Sigmoid colon (tissue), 7 donors: ENCODE measurements at regions of chr7 and their contacts with region 1.

Region 1: DNA sequence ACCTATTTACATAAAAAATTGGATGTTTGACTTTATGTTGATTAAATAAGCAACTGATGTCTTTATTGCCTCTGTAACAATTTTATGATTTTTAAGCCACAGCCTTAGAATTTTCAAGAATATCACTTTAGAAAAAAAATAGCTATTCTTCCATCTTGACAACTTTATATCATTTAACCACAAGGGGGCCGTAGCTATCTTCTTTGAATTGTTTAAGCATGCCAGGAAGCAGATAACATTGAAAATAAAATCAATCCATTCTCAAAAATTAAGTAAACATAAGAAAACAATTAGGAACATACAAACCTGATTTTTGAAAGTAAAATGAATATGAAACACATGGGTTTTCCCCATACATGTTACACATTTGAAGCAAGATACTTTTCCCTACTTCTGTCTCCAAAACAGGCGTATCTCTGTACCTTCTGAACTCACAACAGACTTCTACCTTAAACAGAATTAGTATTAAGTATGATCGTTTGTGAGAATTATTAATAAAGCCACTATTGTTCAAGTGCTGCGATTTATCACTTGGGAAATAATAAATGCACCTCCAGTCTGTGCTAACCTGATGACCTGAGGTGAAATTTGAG is 209.0 kb downstream of the CACNA2D1 start:
- DNase-seq: no peak
- H3K4me3 ChIP-seq: no peak overlapping the region
- H3K27ac ChIP-seq: peak overlapping the region in 2 of 4 donors; percentile 48 to 52
- H3K4me1 ChIP-seq: peaks cover 0 to 21% (median 11%) of the 10 kb centered on the region in 4 donors
- H3K27me3 ChIP-seq: no peaks in the 10 kb centered on the region
- CTCF ChIP-seq: peak; percentile 17 to 62 (median 43)
- EP300 ChIP-seq: no peak
- POLR2A ChIP-seq: no peak

Region 2: GRCh38 chr7:82257118-82257695 is 22.7 kb after region 1 on chr7:
- intact Hi-C with region 1: no loop called
- DNase-seq: no peak
- H3K4me3 ChIP-seq: no peak overlapping the region
- H3K27ac ChIP-seq: peak overlapping the region in 2 of 4 donors; percentile 41 to 70
- H3K4me1 ChIP-seq: peaks cover 0 to 19% (median 16%) of the 10 kb centered on the region in 4 donors
- H3K27me3 ChIP-seq: no peaks in the 10 kb centered on the region
- CTCF ChIP-seq: no peak
- EP300 ChIP-seq: no peak
- POLR2A ChIP-seq: no peak

Region 3: GRCh38 chr7:82443547-82444219 is 209.1 kb after region 1 on chr7 and contains the start of gene CACNA2D1:
- intact Hi-C with region 1: loop called (anchors 2 kb)
- DNase-seq: peak; percentile 96
- H3K4me3 ChIP-seq: peak within 1 kb of the TSS; percentile 72 to 94 (median 88)
- H3K27ac ChIP-seq: peak within 1 kb of the TSS; percentile 95 to 98 (median 96)
- H3K4me1 ChIP-seq: peaks cover 0 to 35% (median 14%) of the 10 kb centered on the region in 4 donors
- H3K27me3 ChIP-seq: no peaks in the 10 kb centered on the region
- CTCF ChIP-seq: peak in 1 of 4 experiments; percentile 44
- EP300 ChIP-seq: no peak
- POLR2A ChIP-seq: no peak
- total RNA-seq, gene CACNA2D1: 59.7 to 115 (median 87.4) TPM

Region 4: DNA sequence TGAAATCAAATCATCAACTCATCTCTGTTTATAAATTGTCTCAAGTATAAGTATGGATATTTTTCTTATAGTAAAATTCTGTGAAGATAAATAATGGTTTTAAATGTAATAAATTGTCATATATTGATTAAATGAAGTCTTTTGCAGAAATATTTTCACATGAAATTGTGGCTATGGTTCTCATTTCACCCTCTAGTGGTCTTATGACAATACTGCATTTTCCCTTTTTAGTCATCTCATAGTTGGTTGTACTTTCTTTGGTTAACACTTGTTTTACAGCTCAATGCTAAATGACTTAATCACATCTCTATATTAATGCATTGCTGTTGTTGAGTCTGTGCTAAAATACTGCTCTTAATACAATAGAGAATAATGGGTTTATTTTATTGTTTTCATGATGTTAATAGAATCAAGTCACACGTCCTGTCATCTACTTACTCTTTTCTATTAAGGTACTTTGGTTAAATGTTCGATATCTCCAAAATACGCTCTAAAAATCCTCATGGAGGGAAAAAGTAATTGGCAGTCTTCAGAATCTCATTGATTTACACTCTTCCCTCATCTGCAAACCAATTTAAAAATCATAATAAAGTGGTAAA is 247.0 kb after region 1 on chr7:
- intact Hi-C with region 1: loop called (anchors 5 kb)
- DNase-seq: no peak
- H3K4me3 ChIP-seq: no peak overlapping the region
- H3K27ac ChIP-seq: no peak overlapping the region
- H3K4me1 ChIP-seq: peaks cover 0 to 9% (median 3%) of the 10 kb centered on the region in 4 donors
- H3K27me3 ChIP-seq: no peaks in the 10 kb centered on the region
- CTCF ChIP-seq: peak in 3 of 4 experiments; percentile 46 to 79 (median 71)
- EP300 ChIP-seq: no peak
- POLR2A ChIP-seq: no peak

Region 5: DNA sequence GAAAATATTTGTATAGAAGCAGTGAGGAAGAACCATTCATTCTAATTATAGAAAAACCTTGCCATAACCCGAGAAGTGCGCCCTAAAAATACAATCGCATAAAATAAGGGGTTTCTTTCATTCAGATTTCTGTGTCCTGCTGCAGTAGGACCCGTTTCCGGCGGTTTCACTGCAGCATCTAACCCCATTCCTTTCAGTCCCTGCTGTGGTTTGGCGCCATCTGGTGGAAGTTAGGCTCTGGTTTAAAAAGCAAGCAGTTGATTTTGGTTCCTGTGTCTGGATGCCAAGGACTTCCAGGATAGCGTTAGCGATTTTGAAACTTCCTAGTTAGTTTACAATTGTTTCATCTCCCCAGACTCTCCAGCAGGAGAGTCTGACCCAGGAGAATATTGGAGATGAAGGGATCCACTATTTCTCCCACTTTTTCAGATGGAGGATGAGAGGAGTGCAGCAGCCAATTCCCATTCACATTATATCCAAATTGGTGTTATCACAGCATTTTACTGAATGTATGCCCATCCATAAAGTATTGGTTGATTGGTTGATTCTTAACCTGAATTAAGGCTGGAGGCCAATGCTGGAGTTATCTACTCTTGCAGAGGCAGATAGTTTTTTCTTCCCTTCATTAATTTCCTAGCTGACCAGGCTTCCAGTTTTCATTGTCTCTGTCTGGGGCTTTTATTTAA is 337.8 kb after region 1 on chr7:
- intact Hi-C with region 1: loop called (anchors 2 kb)
- DNase-seq: peak; percentile 92
- H3K4me3 ChIP-seq: no peak overlapping the region
- H3K27ac ChIP-seq: no peak overlapping the region
- H3K4me1 ChIP-seq: peaks cover 0 to 3% (median 0%) of the 10 kb centered on the region in 4 donors
- H3K27me3 ChIP-seq: no peaks in the 10 kb centered on the region
- CTCF ChIP-seq: peak; percentile 57 to 93 (median 77)
- EP300 ChIP-seq: no peak
- POLR2A ChIP-seq: no peak